ENCODE measurements at regions of chr7 and their contacts with region 1.

Region 1: GRCh38 chr7:142535123-142535779 is 214.0 kb upstream of the PRSS1 start:
- DNase-seq: peak; percentile 67 to 86
- ATAC-seq: peak; percentile 89 to 99 (median 96)
- H3K4me3 ChIP-seq: no peak overlapping the region
- H3K27ac ChIP-seq: no peak overlapping the region
- H3K4me1 ChIP-seq: no peaks in the 10 kb centered on the region
- H3K27me3 ChIP-seq: no peaks in the 10 kb centered on the region
- CTCF ChIP-seq: peak; percentile 80

Region 2: DNA sequence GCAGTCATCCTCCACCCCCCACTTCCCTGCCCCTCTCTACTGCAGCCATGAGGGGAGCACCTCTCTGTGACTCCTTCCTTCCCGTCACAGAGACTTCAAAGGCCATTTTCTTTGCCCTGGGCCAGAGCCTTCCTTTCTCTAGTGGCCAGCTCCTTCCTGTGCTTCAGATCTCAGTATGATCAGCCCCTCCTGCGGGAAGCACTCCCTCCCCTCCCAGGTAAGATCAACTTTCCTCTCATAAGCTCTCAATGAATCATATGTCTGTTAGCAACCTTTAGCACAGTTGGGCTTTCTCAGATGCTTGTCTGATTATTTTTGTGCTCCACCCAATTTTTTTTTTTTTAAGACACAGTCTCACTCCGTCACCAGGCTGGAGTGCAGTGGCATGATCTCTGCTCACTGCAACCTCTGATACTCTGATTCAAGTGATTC is 27.0 kb before region 1 on chr7:
- intact Hi-C with region 1: no loop called
- DNase-seq: no peak
- ATAC-seq: peak; percentile 47 to 78 (median 70)
- H3K4me3 ChIP-seq: no peak overlapping the region
- H3K27ac ChIP-seq: no peak overlapping the region
- H3K4me1 ChIP-seq: no peaks in the 10 kb centered on the region
- H3K27me3 ChIP-seq: no peaks in the 10 kb centered on the region
- CTCF ChIP-seq: no peak

Region 3: DNA sequence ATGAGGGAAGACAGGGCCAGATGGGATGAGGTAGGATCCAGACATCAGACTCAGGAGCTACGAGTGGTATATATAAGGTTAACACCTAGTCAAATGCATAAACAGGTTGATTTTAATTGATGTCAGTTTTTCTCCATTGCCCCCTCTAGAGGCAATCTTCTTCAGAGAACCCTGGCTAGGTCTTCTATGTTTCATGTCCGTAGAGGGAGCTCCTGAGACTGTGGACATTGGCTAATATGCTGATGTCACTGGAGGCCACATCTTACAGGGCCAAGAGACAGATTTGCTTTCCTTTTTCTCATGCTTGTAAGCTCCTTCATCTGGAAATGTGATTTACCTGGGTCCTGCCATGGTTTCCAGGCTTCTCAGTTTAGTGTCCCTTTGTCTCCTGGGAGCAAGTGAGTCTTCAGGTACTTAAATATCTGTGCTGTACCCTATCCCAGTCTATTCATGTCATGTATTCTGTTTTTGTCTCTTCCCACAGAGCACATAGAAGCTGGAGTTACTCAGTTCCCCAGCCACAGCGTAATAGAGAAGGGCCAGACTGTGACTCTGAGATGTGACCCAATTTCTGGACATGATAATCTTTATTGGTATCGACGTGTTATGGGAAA is 52.4 kb after region 1 on chr7:
- intact Hi-C with region 1: loop called in 1 of 2 experiments (anchors 5 kb)
- DNase-seq: no peak
- ATAC-seq: peak; percentile 62 to 86 (median 82)
- H3K4me3 ChIP-seq: no peak overlapping the region
- H3K27ac ChIP-seq: no peak overlapping the region
- H3K4me1 ChIP-seq: peaks cover 10% of the 10 kb centered on the region
- H3K27me3 ChIP-seq: no peaks in the 10 kb centered on the region
- CTCF ChIP-seq: peak; percentile 46

Region 4: GRCh38 chr7:142612237-142612881 is 77.1 kb after region 1 on chr7:
- intact Hi-C with region 1: no loop called
- DNase-seq: no peak
- ATAC-seq: peak in 1 of 4 donors; percentile 21
- H3K4me3 ChIP-seq: no peak overlapping the region
- H3K27ac ChIP-seq: no peak overlapping the region
- H3K4me1 ChIP-seq: no peaks in the 10 kb centered on the region
- H3K27me3 ChIP-seq: no peaks in the 10 kb centered on the region
- CTCF ChIP-seq: no peak